Activated CD8-positive, alpha-beta T cell treated with anti-CD3 and anti-CD28 coated beads, Interleukin-2, amount 10 ng/mL, durations not matched to agents 7 days and 5 days (primary cell): ENCODE measurements at regions of chr11 and their contacts with region 1.

Region 1: GRCh38 chr11:73661035-73661628 is 14.8 kb downstream of the PLEKHB1 start:
- DNase-seq: peak; percentile 82
- ATAC-seq: peak; percentile 91
- H3K4me3 Mint-ChIP-seq: peak overlapping the region; percentile 32
- H3K27ac Mint-ChIP-seq: no peak overlapping the region
- H3K4me1 Mint-ChIP-seq: peaks cover 3% of the 10 kb centered on the region
- H3K27me3 Mint-ChIP-seq: no peaks in the 10 kb centered on the region

Region 2: DNA sequence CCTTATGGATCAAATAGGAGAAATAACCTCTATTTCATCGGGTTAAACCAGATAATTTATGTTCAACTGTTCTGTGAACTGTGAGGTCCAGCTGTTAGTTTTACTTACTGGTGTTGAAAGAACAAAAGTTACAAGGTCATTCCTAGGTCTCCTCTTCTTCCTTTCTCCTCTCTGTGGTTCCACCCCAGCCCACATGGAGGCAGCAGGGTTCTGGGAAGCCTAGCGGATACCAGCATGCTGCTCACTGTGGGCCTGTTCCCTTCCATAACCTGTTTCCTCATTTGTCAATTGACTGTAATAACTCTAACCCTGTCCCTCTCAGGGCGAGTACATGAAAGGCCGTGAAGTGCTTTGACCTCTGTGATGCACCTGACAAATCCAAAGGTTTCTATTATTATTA is 257.1 kb before region 1 on chr11:
- CTCF ChIA-PET with region 1: interaction called, 10 read pairs
- POLR2A ChIA-PET with region 1: interaction called, 3 read pairs
- DNase-seq: no peak
- ATAC-seq: no peak
- H3K4me3 Mint-ChIP-seq: no peak overlapping the region
- H3K27ac Mint-ChIP-seq: no peak overlapping the region
- H3K4me1 Mint-ChIP-seq: peaks cover 4% of the 10 kb centered on the region
- H3K27me3 Mint-ChIP-seq: no peaks in the 10 kb centered on the region

Region 3: DNA sequence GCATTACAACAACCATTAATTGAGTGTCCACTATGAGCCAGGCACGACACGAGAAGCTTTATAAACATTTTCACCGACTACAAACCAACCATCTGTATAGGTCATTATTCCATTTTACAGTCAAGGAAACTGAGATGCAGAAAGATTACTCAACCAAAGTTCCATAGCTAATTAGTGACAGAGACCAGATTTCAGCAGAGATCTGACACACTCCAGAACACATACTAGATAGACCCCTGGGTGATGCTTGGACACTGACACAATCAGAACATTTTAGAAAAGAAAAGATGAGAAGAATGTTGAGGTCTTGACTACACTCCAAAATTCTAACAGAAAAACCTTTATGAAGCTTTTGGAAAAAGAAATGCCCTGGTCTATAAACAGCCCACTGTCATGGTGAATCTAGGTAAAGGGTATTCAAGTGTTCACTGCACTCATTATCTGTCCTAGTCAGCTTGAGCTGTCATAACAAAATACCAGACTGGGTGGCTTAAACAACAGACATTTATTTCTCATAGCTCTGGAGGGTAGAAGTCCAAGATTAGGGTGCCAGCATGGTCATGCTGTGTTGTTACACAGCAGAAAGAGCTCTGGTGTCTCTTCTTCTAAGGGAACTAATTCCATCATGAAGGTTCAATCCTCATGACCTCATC is 196.0 kb before region 1 on chr11:
- CTCF ChIA-PET with region 1: interaction called, 10 read pairs
- POLR2A ChIA-PET with region 1: no interaction called
- DNase-seq: no peak
- ATAC-seq: no peak
- H3K4me3 Mint-ChIP-seq: no peak overlapping the region
- H3K27ac Mint-ChIP-seq: no peak overlapping the region
- H3K4me1 Mint-ChIP-seq: peaks cover 6% of the 10 kb centered on the region
- H3K27me3 Mint-ChIP-seq: no peaks in the 10 kb centered on the region

Region 4: DNA sequence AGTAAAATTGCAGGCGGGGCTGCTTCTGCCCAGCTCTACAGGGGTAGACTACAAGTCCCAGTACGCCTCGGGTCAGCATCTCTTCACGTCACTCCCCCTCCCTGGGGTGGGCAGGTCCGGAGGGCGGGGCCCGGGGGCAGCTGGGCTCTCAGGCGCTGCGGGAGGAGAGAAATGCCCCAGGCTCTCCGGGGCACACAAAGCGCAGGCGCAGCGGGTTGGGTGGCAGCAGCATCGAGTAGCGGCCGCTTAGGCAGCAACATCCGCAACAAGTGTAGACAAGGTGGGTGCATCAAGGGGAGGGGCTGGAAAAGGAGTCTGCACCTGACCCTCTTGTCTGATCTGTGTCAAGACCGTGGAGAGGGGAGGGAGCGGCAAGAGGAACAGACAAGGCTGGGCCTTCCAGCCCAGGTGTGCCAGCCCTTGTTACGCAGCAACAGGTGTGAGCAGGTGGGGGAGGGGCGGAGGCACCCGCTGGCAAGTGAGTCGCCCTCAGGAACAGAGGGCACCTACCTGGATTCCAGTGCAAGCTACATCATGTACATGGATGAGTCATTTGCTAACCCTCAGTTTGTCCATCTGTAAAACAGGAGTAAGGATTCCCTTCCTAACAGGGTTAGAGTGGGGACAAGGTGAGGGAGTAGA is 13.6 kb before region 1 on chr11:
- CTCF ChIA-PET with region 1: interaction called, 28 read pairs
- POLR2A ChIA-PET with region 1: interaction called, 3 read pairs
- DNase-seq: peak; percentile 95
- ATAC-seq: peak; percentile 99
- H3K4me3 Mint-ChIP-seq: peak overlapping the region; percentile 76
- H3K27ac Mint-ChIP-seq: peak overlapping the region; percentile 78
- H3K4me1 Mint-ChIP-seq: peaks cover 17% of the 10 kb centered on the region
- H3K27me3 Mint-ChIP-seq: no peaks in the 10 kb centered on the region

Region 5: DNA sequence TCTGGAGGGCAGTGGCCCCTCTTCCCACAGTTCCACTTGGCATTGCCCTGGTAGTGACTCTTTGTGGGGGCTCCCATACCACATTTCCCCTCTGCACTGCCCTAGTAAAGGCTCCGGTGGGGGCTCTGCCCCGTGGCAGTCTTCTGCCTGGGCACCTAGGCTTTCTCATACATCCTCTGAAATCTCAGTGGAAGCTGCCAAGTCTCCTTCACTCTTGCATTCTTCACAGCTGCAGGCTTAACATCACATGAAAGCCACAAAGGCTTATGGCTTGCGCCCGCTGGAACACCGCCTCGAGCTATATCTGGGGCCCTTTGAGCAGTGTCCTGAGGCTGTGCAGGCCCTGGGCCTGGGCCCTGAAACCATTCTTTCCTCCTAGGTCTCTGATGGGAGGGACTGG is 10.6 kb after region 1 on chr11:
- CTCF ChIA-PET with region 1: interaction called, 15 read pairs
- POLR2A ChIA-PET with region 1: no interaction called
- DNase-seq: no peak
- ATAC-seq: peak; percentile 30
- H3K4me3 Mint-ChIP-seq: no peak overlapping the region
- H3K27ac Mint-ChIP-seq: no peak overlapping the region
- H3K4me1 Mint-ChIP-seq: no peaks in the 10 kb centered on the region
- H3K27me3 Mint-ChIP-seq: no peaks in the 10 kb centered on the region

Region 6: GRCh38 chr11:73680687-73681086 is 19.6 kb after region 1 on chr11:
- CTCF ChIA-PET with region 1: interaction called, 18 read pairs
- POLR2A ChIA-PET with region 1: no interaction called
- DNase-seq: no peak
- ATAC-seq: no peak
- H3K4me3 Mint-ChIP-seq: no peak overlapping the region
- H3K27ac Mint-ChIP-seq: no peak overlapping the region
- H3K4me1 Mint-ChIP-seq: no peaks in the 10 kb centered on the region
- H3K27me3 Mint-ChIP-seq: no peaks in the 10 kb centered on the region

Region 7: GRCh38 chr11:73982969-73983740 is 322.0 kb after region 1 on chr11:
- CTCF ChIA-PET with region 1: no interaction called
- POLR2A ChIA-PET with region 1: no interaction called
- DNase-seq: peak; percentile 97
- ATAC-seq: peak; percentile 80
- H3K4me3 Mint-ChIP-seq: peak overlapping the region; percentile 87
- H3K27ac Mint-ChIP-seq: peak overlapping the region; percentile 95
- H3K4me1 Mint-ChIP-seq: peaks cover 48% of the 10 kb centered on the region
- H3K27me3 Mint-ChIP-seq: no peaks in the 10 kb centered on the region